ENCODE measurements at regions of chr1 and their contacts with region 1.

Region 1: GRCh38 chr1:235843461-235843961 is 23.2 kb downstream of the LYST start:
- DNase-seq: peak; percentile 40
- H3K4me3 ChIP-seq: no peak overlapping the region
- H3K27ac ChIP-seq: no peak overlapping the region
- H3K4me1 ChIP-seq: no peaks in the 10 kb centered on the region; a peak in 2 of 4 replicates
- H3K27me3 ChIP-seq: no peaks in the 10 kb centered on the region
- CTCF ChIP-seq: peak; percentile 68
- EP300 ChIP-seq: no peak
- RAD21 ChIP-seq: peak; percentile 79

Region 2: DNA sequence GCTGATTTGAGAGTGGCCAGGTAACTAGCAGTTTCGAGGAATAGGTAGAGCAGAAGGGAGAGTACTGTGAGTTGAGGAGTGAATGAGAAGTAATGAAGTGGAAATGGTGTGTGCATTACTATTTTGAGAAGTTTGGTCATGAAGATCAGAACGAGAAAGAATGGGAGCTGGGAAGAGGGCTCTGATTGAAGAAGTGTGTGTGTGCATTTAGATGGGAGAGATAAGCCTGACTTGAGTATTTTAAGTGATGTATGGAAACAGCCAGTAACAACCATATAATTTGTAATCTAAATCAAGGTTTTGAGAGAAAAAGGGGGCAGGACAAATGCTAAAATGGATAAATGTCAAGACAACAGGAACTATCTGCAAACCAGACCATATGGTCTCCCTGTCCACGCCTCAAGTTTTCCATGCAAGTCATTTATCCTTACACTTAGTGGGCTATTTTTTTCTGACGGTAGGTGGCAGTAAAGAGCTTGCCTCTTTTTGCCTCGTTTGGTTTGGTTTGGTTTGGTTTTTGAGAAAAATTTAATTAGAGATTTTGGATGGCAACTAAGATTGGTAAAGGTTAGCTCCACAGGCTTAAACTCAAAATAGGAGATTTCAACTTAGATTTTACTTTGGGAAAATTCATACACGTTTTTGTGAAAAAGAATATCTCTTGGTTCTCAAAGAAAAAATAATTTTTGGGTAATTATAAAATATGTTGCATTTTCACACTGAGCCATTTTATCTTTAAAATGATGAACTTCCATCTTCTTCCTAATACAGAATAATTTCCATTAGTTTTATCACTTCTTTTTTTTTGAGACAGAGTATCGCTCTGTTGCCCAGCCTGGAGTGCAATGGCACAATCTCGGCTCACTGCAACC is 329.8 kb before region 1 on chr1:
- CTCF ChIA-PET with region 1: interaction called, 20 read pairs
- POLR2A ChIA-PET with region 1: no interaction called
- DNase-seq: peak; percentile 55
- H3K4me3 ChIP-seq: peak overlapping the region in 1 of 2 experiments; percentile 28; a peak in 1 of 4 replicates
- H3K27ac ChIP-seq: no peak overlapping the region
- H3K4me1 ChIP-seq: no peaks in the 10 kb centered on the region
- H3K27me3 ChIP-seq: no peaks in the 10 kb centered on the region
- CTCF ChIP-seq: peak; percentile 96
- EP300 ChIP-seq: no peak; a peak in 1 of 4 replicates
- RAD21 ChIP-seq: peak; percentile 92

Region 3: GRCh38 chr1:235783148-235783776 is 60.2 kb before region 1 on chr1:
- CTCF ChIA-PET with region 1: interaction called, 27 read pairs
- POLR2A ChIA-PET with region 1: no interaction called
- DNase-seq: peak; percentile 27
- H3K4me3 ChIP-seq: no peak overlapping the region
- H3K27ac ChIP-seq: peak overlapping the region in 1 of 2 experiments; percentile 48; a peak in 1 of 4 replicates
- H3K4me1 ChIP-seq: peaks cover 4 to 5% of the 10 kb centered on the region in 2 experiments; a peak in 2 of 4 replicates
- H3K27me3 ChIP-seq: no peaks in the 10 kb centered on the region
- CTCF ChIP-seq: peak; percentile 63
- EP300 ChIP-seq: no peak
- RAD21 ChIP-seq: peak; percentile 82

Region 4: GRCh38 chr1:235831148-235831547 is 12.4 kb before region 1 on chr1:
- CTCF ChIA-PET with region 1: interaction called, 18 read pairs
- POLR2A ChIA-PET with region 1: no interaction called
- DNase-seq: no peak
- H3K4me3 ChIP-seq: no peak overlapping the region
- H3K27ac ChIP-seq: no peak overlapping the region
- H3K4me1 ChIP-seq: no peaks in the 10 kb centered on the region; a peak in 1 of 4 replicates
- H3K27me3 ChIP-seq: no peaks in the 10 kb centered on the region
- CTCF ChIP-seq: no peak
- EP300 ChIP-seq: no peak
- RAD21 ChIP-seq: no peak

Region 5: GRCh38 chr1:235855811-235856429 is 12.4 kb after region 1 on chr1:
- CTCF ChIA-PET with region 1: interaction called, 13 read pairs
- POLR2A ChIA-PET with region 1: no interaction called
- DNase-seq: no peak
- H3K4me3 ChIP-seq: no peak overlapping the region
- H3K27ac ChIP-seq: peak overlapping the region in 1 of 2 experiments; percentile 59; a peak in 2 of 4 replicates
- H3K4me1 ChIP-seq: no peaks in the 10 kb centered on the region; a peak in 1 of 4 replicates
- H3K27me3 ChIP-seq: no peaks in the 10 kb centered on the region
- CTCF ChIP-seq: no peak
- EP300 ChIP-seq: no peak
- RAD21 ChIP-seq: no peak

Region 6: GRCh38 chr1:235866913-235867845 is 23.7 kb after region 1 on chr1:
- CTCF ChIA-PET with region 1: interaction called, 13 read pairs
- POLR2A ChIA-PET with region 1: no interaction called
- DNase-seq: peak; percentile 99
- H3K4me3 ChIP-seq: peak overlapping the region; percentile 69 to 72
- H3K27ac ChIP-seq: peak overlapping the region; percentile 83 to 88
- H3K4me1 ChIP-seq: peaks cover 0 to 7% of the 10 kb centered on the region in 2 experiments; a peak in 2 of 4 replicates
- H3K27me3 ChIP-seq: no peaks in the 10 kb centered on the region
- CTCF ChIP-seq: no peak
- EP300 ChIP-seq: no peak
- RAD21 ChIP-seq: no peak